ENCODE measurements at regions of chr3 and their contacts with region 1.

Region 1: GRCh38 chr3:58383904-58384303 is 49.7 kb downstream of the PDHB start:
- DNase-seq: no peak
- ATAC-seq: peak in 2 of 8 donors; percentile 53 to 68
- H3K4me3 ChIP-seq: no peak overlapping the region
- H3K27ac ChIP-seq: peak overlapping the region in 3 of 10 donors; percentile 33 to 46 (median 40)
- H3K4me1 ChIP-seq: peaks cover 3 to 44% (median 22%) of the 10 kb centered on the region in 9 donors
- H3K27me3 ChIP-seq: no peaks in the 10 kb centered on the region
- CTCF ChIP-seq: no peak

Region 2: DNA sequence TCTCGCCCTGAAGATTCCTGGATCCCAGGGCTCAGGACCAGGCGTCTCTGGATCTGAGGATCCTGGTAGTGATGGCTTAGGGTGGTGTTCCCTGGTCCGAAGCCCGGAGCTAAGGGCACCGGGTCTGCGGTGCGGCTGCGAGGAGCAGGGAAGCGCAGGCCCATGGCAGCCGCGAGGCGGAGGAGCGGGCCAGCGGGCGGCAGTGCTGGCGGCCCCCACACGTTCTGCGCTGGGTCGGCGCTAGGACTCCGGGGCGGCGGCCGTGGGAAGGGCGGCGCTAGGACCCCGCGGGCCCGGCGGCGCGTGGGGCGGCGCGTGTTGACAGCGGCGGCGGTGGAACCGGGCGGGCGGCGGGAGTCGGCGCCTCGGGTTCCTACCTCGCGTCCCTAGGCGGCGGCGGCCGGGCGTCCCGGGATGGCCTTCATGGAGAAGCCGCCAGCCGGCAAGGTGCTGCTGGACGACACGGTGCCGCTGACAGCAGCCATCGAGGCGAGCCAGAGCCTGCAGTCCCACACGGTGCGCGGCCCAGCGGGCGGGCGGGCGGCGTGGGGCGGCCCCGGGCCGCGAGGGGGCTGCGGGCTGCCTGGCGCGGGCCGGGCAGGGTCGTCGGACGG is 51.2 kb before region 1 on chr3 and contains the start of gene PXK:
- intact Hi-C with region 1: loop called in 2 of 10 experiments (anchors 10 kb)
- DNase-seq: peak; percentile 78 to 85
- ATAC-seq: peak; percentile 93 to 98 (median 96)
- H3K4me3 ChIP-seq: peak within 1 kb of the TSS; percentile 61 to 95 (median 79)
- H3K27ac ChIP-seq: peak within 1 kb of the TSS in 9 of 10 donors; percentile 43 to 89 (median 70)
- H3K4me1 ChIP-seq: peaks cover 3 to 41% (median 19%) of the 10 kb centered on the region in 9 donors
- H3K27me3 ChIP-seq: no peaks in the 10 kb centered on the region
- CTCF ChIP-seq: peak in 5 of 9 donors; percentile 6 to 42 (median 21)
- total RNA-seq, gene PXK: 7.9 to 16.3 (median 11.7) TPM

Region 3: DNA sequence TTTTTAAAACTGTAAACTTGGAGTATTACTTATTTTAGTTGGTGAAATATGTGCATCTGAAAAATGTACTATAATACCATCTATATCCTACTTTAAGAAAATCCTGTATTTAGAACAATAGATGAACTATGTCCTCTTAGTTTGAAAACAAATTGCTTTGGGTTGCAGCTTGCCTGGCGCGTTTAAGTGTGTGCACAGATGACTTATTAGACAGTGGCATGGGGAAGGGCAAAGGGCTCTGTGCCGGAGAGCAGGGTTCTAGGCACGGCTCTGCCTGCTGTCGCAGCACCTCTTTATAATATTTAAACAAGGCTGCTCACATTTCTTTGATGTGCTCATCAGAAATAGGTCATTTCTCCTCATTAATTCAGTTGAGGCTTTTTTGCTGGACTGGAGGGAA is 41.2 kb before region 1 on chr3:
- intact Hi-C with region 1: loop called in 3 of 10 experiments (anchors 5 to 10 kb)
- DNase-seq: no peak
- ATAC-seq: no peak
- H3K4me3 ChIP-seq: no peak overlapping the region
- H3K27ac ChIP-seq: no peak overlapping the region
- H3K4me1 ChIP-seq: peaks cover 0 to 13% (median 0%) of the 10 kb centered on the region in 9 donors
- H3K27me3 ChIP-seq: no peaks in the 10 kb centered on the region
- CTCF ChIP-seq: no peak

Region 4: GRCh38 chr3:58539626-58540025 is 155.7 kb after region 1 on chr3:
- intact Hi-C with region 1: no loop called
- DNase-seq: no peak
- ATAC-seq: no peak
- H3K4me3 ChIP-seq: no peak overlapping the region
- H3K27ac ChIP-seq: no peak overlapping the region
- H3K4me1 ChIP-seq: peaks cover 14 to 33% (median 26%) of the 10 kb centered on the region in 9 donors
- H3K27me3 ChIP-seq: no peaks in the 10 kb centered on the region
- CTCF ChIP-seq: no peak